Body of pancreas (tissue), 4 donors: ENCODE measurements at regions of chr17 and their contacts with region 1.

Region 1: DNA sequence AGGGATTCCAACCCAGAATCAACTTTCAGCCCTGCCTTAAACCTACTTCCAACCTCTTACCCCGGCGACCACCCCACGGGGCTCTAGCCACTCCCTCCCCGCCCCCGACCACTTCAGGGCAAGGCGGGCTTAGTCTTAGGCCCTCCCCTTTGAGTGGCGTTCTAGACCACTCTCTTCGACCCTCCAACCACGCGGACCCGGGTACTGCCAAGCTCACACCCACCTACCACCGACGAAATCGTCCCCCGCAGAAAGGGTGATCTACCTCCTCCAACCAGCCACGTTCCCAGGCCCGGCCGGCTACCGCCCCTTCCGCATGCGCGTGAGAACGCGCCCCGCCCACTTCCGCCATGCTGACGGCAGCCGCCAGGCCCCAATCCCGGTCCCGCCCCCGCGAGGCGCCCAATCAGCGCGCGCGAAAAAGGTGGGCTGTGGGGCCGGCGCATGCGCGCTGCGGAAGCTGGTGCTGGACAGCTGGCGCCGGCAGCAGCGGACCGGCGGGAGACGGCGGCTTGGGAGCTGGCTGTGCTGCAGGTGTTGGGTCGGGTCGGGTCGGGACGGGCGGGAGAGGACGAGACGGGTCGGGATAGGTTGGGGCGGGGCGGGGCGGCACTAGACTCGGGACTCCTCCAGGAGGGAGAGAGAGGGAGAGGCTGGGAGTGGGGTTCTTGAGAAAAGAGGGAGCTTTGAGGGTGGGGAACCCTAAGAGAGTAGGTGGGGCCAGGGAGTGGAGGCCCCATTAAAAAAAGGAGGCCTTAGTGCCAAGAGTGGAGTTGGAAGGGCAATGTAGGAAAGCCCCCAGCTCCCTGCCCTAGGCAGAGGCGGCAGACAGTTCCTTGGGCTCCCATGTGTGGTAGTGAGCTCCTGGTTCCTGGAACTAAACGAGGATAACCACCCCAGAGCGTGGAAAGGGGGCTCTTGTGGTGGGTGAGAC is at the start of gene NAT9:
- DNase-seq: peak; percentile 97 to 99 (median 98)
- ATAC-seq: peak; percentile 98
- H3K4me3 ChIP-seq: peak within 1 kb of the TSS; percentile 82 to 92
- H3K27ac ChIP-seq: peak within 1 kb of the TSS; percentile 26 to 73 (median 61)
- H3K4me1 ChIP-seq: peaks cover 31% of the 10 kb centered on the region
- H3K27me3 ChIP-seq: no peaks in the 10 kb centered on the region
- CTCF ChIP-seq: peak in 1 of 7 experiments; percentile 30
- POLR2A ChIP-seq: peak in 2 of 3 donors; percentile 51 to 61
- total RNA-seq, gene NAT9: 21.8 to 23.3 TPM

Region 2: DNA sequence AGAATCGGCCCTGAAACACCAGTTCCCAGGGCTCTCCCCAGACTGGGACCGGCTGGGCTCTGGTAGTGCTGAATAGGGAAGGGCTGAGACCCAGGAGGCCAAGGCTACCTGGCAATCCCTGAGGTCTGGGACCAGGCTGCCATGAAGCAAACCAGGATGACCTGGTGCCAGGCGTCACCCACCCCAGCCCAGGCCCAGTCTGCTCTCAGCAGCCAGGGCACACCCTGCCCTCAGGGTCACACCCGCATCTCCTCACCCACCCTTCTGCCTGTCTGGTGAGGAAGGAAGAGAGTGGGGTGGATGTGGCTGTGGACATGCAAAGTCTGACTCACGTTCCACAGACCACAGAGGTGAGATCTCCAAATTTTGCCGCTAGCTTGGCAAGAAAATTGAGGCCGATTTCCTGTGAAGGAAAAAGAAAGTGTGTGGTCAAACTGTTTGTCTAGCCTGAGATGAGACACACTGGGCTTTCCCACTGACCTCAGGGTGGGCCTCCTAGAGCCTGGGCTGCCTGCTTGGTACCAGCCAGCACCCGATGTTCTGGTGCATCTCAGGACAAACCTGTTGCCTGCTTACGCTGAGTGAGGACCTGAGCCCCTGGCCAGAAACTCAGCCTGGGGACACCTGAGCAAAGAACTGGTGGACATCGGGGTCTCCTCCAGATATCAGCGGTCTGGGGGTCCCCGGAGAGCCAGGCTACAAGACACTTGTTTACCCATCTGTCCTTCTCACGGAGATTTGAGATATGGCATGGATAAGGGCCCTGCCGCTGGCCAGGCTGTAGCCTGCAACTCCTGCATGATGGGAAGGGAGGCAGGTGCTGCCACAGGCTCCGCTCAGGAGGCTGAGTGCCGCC is 45.6 kb before region 1 on chr17:
- intact Hi-C with region 1: loop called (anchors 5 kb)
- DNase-seq: peak in 2 of 4 donors; percentile 26 to 45
- ATAC-seq: no peak
- H3K4me3 ChIP-seq: no peak overlapping the region
- H3K27ac ChIP-seq: no peak overlapping the region
- H3K4me1 ChIP-seq: peaks cover 6% of the 10 kb centered on the region
- H3K27me3 ChIP-seq: no peaks in the 10 kb centered on the region
- CTCF ChIP-seq: no peak
- POLR2A ChIP-seq: no peak

Region 3: DNA sequence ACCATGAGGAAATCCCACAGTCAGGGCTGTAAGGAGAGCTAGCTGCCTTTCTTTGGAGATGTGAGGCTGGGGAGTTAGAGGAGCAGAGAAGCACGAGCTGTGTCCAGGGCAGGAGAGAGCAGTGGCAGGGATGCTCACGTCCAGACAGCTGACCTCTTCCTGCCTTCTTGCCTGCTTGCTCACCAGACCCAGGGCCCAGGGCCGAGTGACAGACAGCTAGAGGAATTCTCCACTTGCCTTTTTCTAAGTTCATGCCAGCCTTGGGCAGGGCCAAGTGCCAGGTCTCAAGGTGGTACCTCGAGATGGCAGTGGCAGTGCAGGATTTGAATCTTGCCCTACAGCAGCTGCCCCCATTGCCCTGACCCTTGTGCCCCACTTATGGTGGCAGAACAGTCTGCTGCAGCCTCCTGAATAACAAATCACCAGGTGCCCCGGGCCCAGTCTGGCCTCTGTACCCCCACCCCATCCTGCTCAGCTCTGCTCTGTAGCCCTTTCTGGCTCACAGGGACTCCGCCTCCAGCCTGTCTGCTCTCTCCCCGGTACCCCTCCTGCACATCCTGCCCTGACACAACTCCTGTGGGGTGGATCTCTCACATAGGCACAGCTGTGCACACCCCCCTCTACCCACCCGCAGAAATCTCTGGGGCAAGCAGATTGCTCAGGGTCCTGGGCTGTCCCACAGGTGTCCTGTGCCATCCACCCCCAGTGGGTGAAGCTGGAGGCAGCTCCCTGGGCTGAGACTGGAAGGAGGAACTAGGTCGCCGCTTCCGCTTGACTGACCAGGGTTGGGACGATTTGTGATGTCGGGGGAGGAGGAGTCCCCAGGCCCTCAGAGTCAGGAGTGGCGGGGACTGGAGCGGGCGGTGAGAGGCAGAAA is 57.4 kb after region 1 on chr17:
- intact Hi-C with region 1: no loop called
- DNase-seq: peak in 1 of 4 donors; percentile 28
- ATAC-seq: no peak
- H3K4me3 ChIP-seq: no peak overlapping the region
- H3K27ac ChIP-seq: no peak overlapping the region
- H3K4me1 ChIP-seq: no peaks in the 10 kb centered on the region
- H3K27me3 ChIP-seq: no peaks in the 10 kb centered on the region
- CTCF ChIP-seq: no peak
- POLR2A ChIP-seq: no peak